ENCODE measurements at regions of chr14 and their contacts with region 1.

Region 1: GRCh38 chr14:22556990-22557623 is 31.9 kb downstream of the DAD1 start:
- DNase-seq: peak; percentile 83 to 98 (median 92)
- ATAC-seq: peak; percentile 24
- H3K4me3 ChIP-seq: peak overlapping the region; percentile 58
- H3K4me3 Mint-ChIP-seq: peak overlapping the region; percentile 96
- H3K27ac ChIP-seq: peak overlapping the region; percentile 99
- H3K27ac Mint-ChIP-seq: peak overlapping the region; percentile 97
- H3K4me1 ChIP-seq: peaks cover 100% of the 10 kb centered on the region
- H3K4me1 Mint-ChIP-seq: peaks cover 93% of the 10 kb centered on the region
- H3K27me3 ChIP-seq: no peaks in the 10 kb centered on the region
- H3K27me3 Mint-ChIP-seq: peaks cover 6% of the 10 kb centered on the region
- CTCF ChIP-seq: peak; percentile 100

Region 2: DNA sequence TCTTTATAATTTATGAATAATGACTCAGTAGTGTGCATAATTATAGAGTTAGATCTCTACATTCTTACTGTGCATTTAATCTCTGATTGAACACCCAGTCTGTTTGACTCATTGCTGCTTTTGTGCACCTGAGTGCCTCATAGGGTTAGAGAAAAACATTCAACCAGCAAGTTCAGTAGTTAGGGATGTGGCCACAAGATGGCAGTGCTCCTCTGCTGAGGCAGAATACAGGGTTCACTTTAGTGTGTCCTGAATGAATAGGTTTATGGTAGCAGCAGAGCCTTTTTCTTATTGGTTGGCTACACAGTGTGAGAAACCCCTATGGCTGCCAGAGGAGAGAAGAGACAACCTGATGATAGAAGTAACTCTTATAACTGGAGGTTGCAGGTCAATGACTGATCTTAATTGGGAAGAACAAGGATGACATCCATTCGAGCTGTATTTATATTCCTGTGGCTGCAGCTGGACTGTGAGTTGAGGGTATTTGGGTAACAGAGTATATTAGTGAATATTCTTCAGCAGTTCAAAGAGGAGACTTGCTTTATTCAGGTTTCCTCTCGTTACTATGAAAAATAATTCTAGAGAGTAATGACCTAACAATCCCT is 688.6 kb before region 1 on chr14:
- CTCF ChIA-PET with region 1: interaction called, 3 read pairs
- POLR2A ChIA-PET with region 1: interaction called, 4 read pairs
- intact Hi-C with region 1: loop called (anchors 5 kb)
- DNase-seq: peak; percentile 64 to 86 (median 75)
- ATAC-seq: peak; percentile 92
- H3K4me3 ChIP-seq: peak overlapping the region; percentile 23
- H3K4me3 Mint-ChIP-seq: peak overlapping the region; percentile 71
- H3K27ac ChIP-seq: no peak overlapping the region
- H3K27ac Mint-ChIP-seq: peak overlapping the region; percentile 18
- H3K4me1 ChIP-seq: peaks cover 1% of the 10 kb centered on the region
- H3K4me1 Mint-ChIP-seq: peaks cover 36% of the 10 kb centered on the region
- H3K27me3 ChIP-seq: no peaks in the 10 kb centered on the region
- H3K27me3 Mint-ChIP-seq: no peaks in the 10 kb centered on the region
- CTCF ChIP-seq: peak; percentile 78

Region 3: DNA sequence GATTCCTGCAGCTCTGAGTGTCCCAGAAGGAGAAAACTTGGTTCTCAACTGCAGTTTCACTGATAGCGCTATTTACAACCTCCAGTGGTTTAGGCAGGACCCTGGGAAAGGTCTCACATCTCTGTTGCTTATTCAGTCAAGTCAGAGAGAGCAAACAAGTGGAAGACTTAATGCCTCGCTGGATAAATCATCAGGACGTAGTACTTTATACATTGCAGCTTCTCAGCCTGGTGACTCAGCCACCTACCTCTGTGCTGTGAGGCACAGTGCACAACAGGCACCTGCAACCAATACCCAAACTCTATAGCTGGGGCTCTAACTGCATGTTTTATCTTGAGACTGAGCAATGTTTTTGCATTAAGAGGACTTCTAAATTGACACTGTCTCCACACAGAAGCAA is 504.3 kb before region 1 on chr14:
- CTCF ChIA-PET with region 1: no interaction called
- POLR2A ChIA-PET with region 1: no interaction called
- intact Hi-C with region 1: no loop called
- DNase-seq: peak in 9 of 14 experiments; percentile 7 to 52 (median 31)
- ATAC-seq: peak; percentile 77
- H3K4me3 ChIP-seq: peak overlapping the region; percentile 44
- H3K4me3 Mint-ChIP-seq: peak overlapping the region; percentile 98
- H3K27ac ChIP-seq: peak overlapping the region; percentile 23 to 24
- H3K27ac Mint-ChIP-seq: peak overlapping the region; percentile 99
- H3K4me1 ChIP-seq: no peaks in the 10 kb centered on the region
- H3K4me1 Mint-ChIP-seq: peaks cover 47% of the 10 kb centered on the region
- H3K27me3 ChIP-seq: no peaks in the 10 kb centered on the region
- H3K27me3 Mint-ChIP-seq: peaks cover 5% of the 10 kb centered on the region
- CTCF ChIP-seq: no peak

Region 4: GRCh38 chr14:22112004-22112403 is 445.1 kb before region 1 on chr14:
- CTCF ChIA-PET with region 1: interaction called, 6 read pairs
- POLR2A ChIA-PET with region 1: no interaction called
- intact Hi-C with region 1: loop called in 1 of 2 experiments (anchors 10 kb)
- DNase-seq: peak; percentile 23 to 66 (median 44)
- ATAC-seq: peak; percentile 25
- H3K4me3 ChIP-seq: peak overlapping the region; percentile 40
- H3K4me3 Mint-ChIP-seq: peak overlapping the region; percentile 74
- H3K27ac ChIP-seq: no peak overlapping the region
- H3K27ac Mint-ChIP-seq: peak overlapping the region; percentile 88
- H3K4me1 ChIP-seq: no peaks in the 10 kb centered on the region
- H3K4me1 Mint-ChIP-seq: peaks cover 33% of the 10 kb centered on the region
- H3K27me3 ChIP-seq: no peaks in the 10 kb centered on the region
- H3K27me3 Mint-ChIP-seq: no peaks in the 10 kb centered on the region
- CTCF ChIP-seq: peak; percentile 32

Region 5: GRCh38 chr14:22483863-22484593 is 73.1 kb before region 1 on chr14:
- CTCF ChIA-PET with region 1: interaction called, 3 read pairs
- POLR2A ChIA-PET with region 1: interaction called, 41 read pairs
- intact Hi-C with region 1: no loop called
- DNase-seq: no peak
- ATAC-seq: peak; percentile 58
- H3K4me3 ChIP-seq: peak overlapping the region; percentile 55
- H3K4me3 Mint-ChIP-seq: peak overlapping the region; percentile 88
- H3K27ac ChIP-seq: peak overlapping the region in 1 of 2 donors; percentile 41
- H3K27ac Mint-ChIP-seq: peak overlapping the region; percentile 93
- H3K4me1 ChIP-seq: peaks cover 3% of the 10 kb centered on the region
- H3K4me1 Mint-ChIP-seq: peaks cover 15% of the 10 kb centered on the region
- H3K27me3 ChIP-seq: no peaks in the 10 kb centered on the region
- H3K27me3 Mint-ChIP-seq: no peaks in the 10 kb centered on the region
- CTCF ChIP-seq: no peak

Region 6: DNA sequence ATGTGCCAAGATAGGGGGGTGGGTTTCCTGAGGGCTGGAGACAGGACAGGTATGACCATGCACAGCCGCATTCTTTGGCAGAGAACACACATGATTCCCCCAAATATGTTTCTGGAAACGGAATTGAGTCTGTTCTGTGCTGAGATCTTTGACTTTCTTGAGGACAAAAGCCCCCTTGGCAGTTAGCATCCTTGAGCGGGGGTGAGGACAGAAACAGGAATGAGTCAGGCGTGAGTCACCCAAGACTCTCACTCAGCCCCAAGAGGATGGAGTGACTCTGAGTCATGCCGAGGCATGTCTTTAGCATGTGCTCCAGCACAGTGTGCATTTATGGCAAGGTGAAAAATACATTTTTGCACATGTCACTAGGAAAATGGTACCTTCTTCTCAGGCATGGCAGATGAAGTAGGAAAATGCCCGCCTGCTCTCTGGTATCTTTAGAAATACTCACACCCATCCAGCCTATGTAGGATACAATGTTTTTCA is 20.2 kb before region 1 on chr14:
- CTCF ChIA-PET with region 1: interaction called, 34 read pairs
- POLR2A ChIA-PET with region 1: interaction called, 331 read pairs
- intact Hi-C with region 1: no loop called
- DNase-seq: peak in 13 of 14 experiments; percentile 66 to 92 (median 74)
- ATAC-seq: peak; percentile 85
- H3K4me3 ChIP-seq: peak overlapping the region; percentile 61
- H3K4me3 Mint-ChIP-seq: peak overlapping the region; percentile 81
- H3K27ac ChIP-seq: peak overlapping the region; percentile 61 to 99
- H3K27ac Mint-ChIP-seq: peak overlapping the region; percentile 93
- H3K4me1 ChIP-seq: peaks cover 86% of the 10 kb centered on the region
- H3K4me1 Mint-ChIP-seq: peaks cover 99% of the 10 kb centered on the region
- H3K27me3 ChIP-seq: no peaks in the 10 kb centered on the region
- H3K27me3 Mint-ChIP-seq: no peaks in the 10 kb centered on the region
- CTCF ChIP-seq: no peak

Region 7: GRCh38 chr14:22829661-22830442 is 272.7 kb after region 1 on chr14 and contains the start of gene MRPL52:
- CTCF ChIA-PET with region 1: interaction called, 3 read pairs
- POLR2A ChIA-PET with region 1: interaction called, 5 read pairs
- intact Hi-C with region 1: loop called in 1 of 2 experiments (anchors 2 kb)
- DNase-seq: peak; percentile 84 to 97 (median 89)
- ATAC-seq: peak; percentile 94
- H3K4me3 ChIP-seq: peak within 1 kb of the TSS; percentile 78
- H3K4me3 Mint-ChIP-seq: peak within 1 kb of the TSS; percentile 85
- H3K27ac ChIP-seq: peak within 1 kb of the TSS; percentile 79 to 89
- H3K27ac Mint-ChIP-seq: peak within 1 kb of the TSS; percentile 89
- H3K4me1 ChIP-seq: peaks cover 22% of the 10 kb centered on the region
- H3K4me1 Mint-ChIP-seq: peaks cover 33% of the 10 kb centered on the region
- H3K27me3 ChIP-seq: peaks cover 0 to 3% of the 10 kb centered on the region in 2 experiments
- H3K27me3 Mint-ChIP-seq: peaks cover 5% of the 10 kb centered on the region
- CTCF ChIP-seq: no peak
- total RNA-seq, gene MRPL52: 27.6 to 29.4 TPM

Region 8: GRCh38 chr14:23186913-23187654 is 630.0 kb after region 1 on chr14:
- CTCF ChIA-PET with region 1: no interaction called
- POLR2A ChIA-PET with region 1: no interaction called
- intact Hi-C with region 1: no loop called
- DNase-seq: peak in 7 of 14 experiments; percentile 3 to 68 (median 37)
- ATAC-seq: peak; percentile 58
- H3K4me3 ChIP-seq: no peak overlapping the region
- H3K4me3 Mint-ChIP-seq: no peak overlapping the region
- H3K27ac ChIP-seq: no peak overlapping the region
- H3K27ac Mint-ChIP-seq: no peak overlapping the region
- H3K4me1 ChIP-seq: peaks cover 15% of the 10 kb centered on the region
- H3K4me1 Mint-ChIP-seq: no peaks in the 10 kb centered on the region
- H3K27me3 ChIP-seq: peaks cover 2 to 12% of the 10 kb centered on the region in 2 experiments
- H3K27me3 Mint-ChIP-seq: no peaks in the 10 kb centered on the region
- CTCF ChIP-seq: peak; percentile 71